ENCODE measurements at regions of chr2 and their contacts with region 1.

Region 1: DNA sequence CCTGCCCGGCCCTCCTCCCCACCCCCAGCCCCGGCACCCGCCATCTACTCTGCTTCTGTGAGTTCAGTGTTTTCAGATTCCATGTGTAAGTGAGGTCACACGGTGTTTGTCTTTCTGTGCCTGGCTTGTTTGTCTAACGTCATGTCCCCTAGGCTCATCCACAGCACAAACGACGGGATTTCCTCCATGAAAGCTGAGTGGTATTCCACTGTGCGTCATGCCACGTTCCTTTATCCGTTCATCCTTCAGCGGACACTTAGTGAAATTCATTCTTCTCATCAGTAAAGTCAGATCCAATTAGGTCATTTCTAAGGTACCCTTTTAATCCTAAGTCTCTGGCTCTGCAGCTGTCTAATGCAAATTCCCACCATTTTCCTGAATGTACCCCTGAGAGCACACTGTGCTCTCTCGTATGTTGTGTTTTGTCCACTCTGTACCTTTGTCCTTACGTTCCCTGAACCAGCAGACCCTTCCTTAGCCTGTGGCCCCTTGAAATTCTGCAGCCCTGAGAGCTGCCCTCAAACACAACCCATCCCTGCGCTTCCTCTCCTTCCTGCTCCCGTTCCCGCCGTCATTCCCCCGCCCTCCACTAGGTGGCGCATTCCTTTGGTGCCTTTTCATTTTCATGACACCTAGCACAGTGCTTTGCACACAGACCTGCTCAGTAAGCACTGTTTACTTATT is 44.1 kb downstream of the TRAPPC12 start:
- DNase-seq: peak; percentile 88
- H3K4me3 ChIP-seq: no peak overlapping the region
- H3K27ac ChIP-seq: no peak overlapping the region
- H3K4me1 ChIP-seq: peaks cover 0 to 15% of the 10 kb centered on the region in 2 experiments; a peak in 1 of 4 replicates
- H3K27me3 ChIP-seq: no peaks in the 10 kb centered on the region
- CTCF ChIP-seq: peak; percentile 100
- EP300 ChIP-seq: no peak
- RAD21 ChIP-seq: peak; percentile 68

Region 2: DNA sequence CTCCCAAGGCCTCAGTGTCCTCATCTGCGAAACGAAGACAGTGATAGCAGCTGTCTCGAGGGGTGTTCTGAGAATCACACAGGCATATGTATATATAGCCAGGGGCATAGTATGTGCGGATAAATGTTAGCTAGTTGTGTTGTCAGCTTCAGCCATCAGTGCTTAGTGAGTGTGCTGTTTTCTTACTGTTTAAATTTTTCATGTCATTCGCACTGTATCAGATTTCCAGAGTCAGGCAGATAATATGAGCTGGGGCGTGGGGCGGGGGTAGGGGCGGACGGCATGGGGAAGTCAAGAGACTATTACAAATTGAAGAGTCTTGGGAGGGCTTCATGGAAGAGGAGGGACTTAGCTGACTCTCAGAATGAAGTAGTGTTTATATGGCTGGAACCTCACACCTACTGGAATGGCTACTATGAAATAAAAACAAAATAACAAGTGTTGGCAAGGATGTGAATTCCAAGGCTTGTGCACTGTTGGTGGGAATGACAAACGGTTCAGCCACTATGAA is 37.1 kb before region 1 on chr2:
- CTCF ChIA-PET with region 1: interaction called, 13 read pairs
- POLR2A ChIA-PET with region 1: no interaction called
- DNase-seq: no peak
- H3K4me3 ChIP-seq: no peak overlapping the region
- H3K27ac ChIP-seq: peak overlapping the region in 1 of 2 experiments; percentile 50; a peak in 1 of 4 replicates
- H3K4me1 ChIP-seq: peaks cover 0 to 5% of the 10 kb centered on the region in 2 experiments; a peak in 2 of 4 replicates
- H3K27me3 ChIP-seq: no peaks in the 10 kb centered on the region
- CTCF ChIP-seq: no peak
- EP300 ChIP-seq: no peak
- RAD21 ChIP-seq: no peak

Region 3: DNA sequence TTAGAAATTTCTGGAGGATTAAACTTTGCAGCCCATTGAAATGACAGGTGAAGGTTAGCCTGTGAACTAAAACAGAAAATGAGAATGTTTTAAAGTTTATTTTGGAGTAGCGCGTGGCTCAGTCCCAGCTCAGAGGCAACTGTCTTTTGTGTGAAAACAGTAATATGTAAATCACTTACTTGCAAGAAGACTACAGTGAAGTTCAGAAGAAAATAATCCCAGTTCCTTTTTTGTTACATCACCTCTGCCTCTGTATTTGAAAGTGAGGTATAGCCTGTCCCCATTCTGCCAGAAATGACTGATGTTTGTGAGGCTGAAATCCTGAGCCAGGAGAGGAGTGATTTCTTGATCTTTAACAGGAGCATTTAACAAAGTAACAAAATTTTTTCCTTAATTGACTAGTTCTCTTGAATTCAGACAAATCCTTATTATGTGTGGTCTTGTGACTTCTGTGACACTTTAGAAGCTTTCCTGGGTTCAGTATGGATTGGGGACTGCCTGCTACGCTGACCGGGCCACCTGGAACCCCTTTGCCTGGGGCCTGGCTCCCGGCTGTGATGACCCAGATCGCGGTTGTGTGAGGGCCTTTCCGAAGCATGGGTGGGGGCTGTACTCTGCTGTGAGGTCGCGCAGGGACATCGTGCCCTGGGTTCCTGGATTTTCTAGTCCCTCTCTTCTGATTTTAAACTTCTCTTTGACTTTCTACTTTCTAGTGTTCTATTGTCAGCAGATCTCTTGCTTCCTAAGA is 19.9 kb before region 1 on chr2:
- CTCF ChIA-PET with region 1: interaction called, 29 read pairs
- POLR2A ChIA-PET with region 1: interaction called, 3 read pairs
- DNase-seq: no peak
- H3K4me3 ChIP-seq: no peak overlapping the region
- H3K27ac ChIP-seq: no peak overlapping the region
- H3K4me1 ChIP-seq: peaks cover 0 to 19% of the 10 kb centered on the region in 2 experiments; a peak in 2 of 4 replicates
- H3K27me3 ChIP-seq: no peaks in the 10 kb centered on the region
- CTCF ChIP-seq: no peak
- EP300 ChIP-seq: no peak
- RAD21 ChIP-seq: no peak

Region 4: GRCh38 chr2:3449086-3449485 is 25.5 kb after region 1 on chr2:
- CTCF ChIA-PET with region 1: interaction called, 49 read pairs
- POLR2A ChIA-PET with region 1: no interaction called
- DNase-seq: peak; percentile 79
- H3K4me3 ChIP-seq: no peak overlapping the region
- H3K27ac ChIP-seq: peak overlapping the region in 1 of 2 experiments; percentile 94; a peak in 2 of 4 replicates
- H3K4me1 ChIP-seq: peaks cover 0 to 29% of the 10 kb centered on the region in 2 experiments; a peak in 2 of 4 replicates
- H3K27me3 ChIP-seq: no peaks in the 10 kb centered on the region
- CTCF ChIP-seq: no peak
- EP300 ChIP-seq: 0 out of 4 replicates have a peak, but pooled peaks of 1 of the 2 experiments have one; percentile 10
- RAD21 ChIP-seq: no peak

Region 5: DNA sequence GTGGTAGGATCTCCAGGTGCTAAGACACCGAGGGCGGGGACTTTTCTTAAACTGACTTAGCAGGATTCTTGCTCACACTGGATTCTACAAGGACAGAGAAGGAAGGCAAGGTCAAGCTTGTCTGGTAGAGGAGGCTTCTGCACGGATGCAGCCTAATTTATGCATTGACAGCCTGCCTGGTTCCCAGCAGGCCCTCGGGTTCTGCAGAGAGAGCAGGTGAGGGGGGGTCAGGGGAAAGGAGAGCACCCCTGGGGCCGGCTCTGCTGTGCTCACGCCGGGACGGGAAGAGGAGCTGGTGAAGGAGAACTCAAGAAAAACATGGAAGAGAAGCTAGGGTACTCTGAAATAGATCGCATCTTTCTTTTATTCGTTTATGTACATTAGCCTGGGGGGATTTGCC is 49.3 kb after region 1 on chr2:
- CTCF ChIA-PET with region 1: interaction called, 15 read pairs
- POLR2A ChIA-PET with region 1: no interaction called
- DNase-seq: no peak
- H3K4me3 ChIP-seq: no peak overlapping the region
- H3K27ac ChIP-seq: no peak overlapping the region
- H3K4me1 ChIP-seq: peaks cover 2 to 9% of the 10 kb centered on the region in 2 experiments; a peak in 2 of 4 replicates
- H3K27me3 ChIP-seq: no peaks in the 10 kb centered on the region
- CTCF ChIP-seq: no peak
- EP300 ChIP-seq: no peak
- RAD21 ChIP-seq: no peak

Region 6: GRCh38 chr2:3536682-3537632 is 113.3 kb after region 1 on chr2:
- CTCF ChIA-PET with region 1: no interaction called
- POLR2A ChIA-PET with region 1: no interaction called
- DNase-seq: peak; percentile 77
- H3K4me3 ChIP-seq: peak overlapping the region; percentile 32 to 63; a peak in 3 of 4 replicates
- H3K27ac ChIP-seq: peak overlapping the region; percentile 72 to 98; a peak in 3 of 4 replicates
- H3K4me1 ChIP-seq: peaks cover 3 to 13% of the 10 kb centered on the region in 2 experiments; a peak in 3 of 4 replicates
- H3K27me3 ChIP-seq: no peaks in the 10 kb centered on the region
- CTCF ChIP-seq: peak; percentile 72
- EP300 ChIP-seq: no peak
- RAD21 ChIP-seq: peak; percentile 15; the same call in 1 of the 2 replicates

Region 7: DNA sequence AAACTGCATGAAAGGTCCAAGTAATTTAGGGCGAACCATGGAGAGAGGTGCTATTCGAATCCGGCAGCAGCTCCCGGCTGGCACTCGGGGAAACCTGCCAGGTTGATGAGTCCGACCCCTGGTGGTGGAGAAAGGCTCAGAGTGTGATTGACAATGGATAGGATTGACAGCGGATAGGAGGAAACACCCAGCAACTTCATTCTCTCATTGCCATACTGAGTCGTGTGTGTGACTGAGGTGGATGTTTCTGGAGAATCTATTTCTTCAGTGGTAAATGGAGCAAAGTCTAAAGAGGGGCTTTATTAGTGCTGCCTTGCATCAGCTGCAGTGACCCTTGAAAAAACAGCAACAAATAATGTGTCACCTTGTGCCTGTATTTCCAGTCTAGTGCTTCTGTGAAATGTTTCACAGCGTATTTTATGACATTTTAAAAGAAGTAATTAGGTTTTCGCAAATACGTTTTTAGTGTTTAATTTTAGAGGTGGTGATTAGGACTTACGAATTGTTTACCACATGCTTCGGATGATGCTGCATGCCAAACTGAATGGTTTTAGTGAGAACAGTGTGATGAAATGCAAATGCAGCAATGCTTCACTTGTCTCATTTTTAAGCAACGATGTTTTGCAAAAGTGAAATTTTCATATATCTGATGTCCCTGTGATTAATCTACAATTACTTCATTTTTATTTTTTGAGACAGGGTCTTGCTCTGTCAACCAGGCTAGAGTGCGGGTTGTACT is 381.7 kb after region 1 on chr2:
- CTCF ChIA-PET with region 1: no interaction called
- POLR2A ChIA-PET with region 1: no interaction called
- DNase-seq: peak; percentile 75
- H3K4me3 ChIP-seq: peak overlapping the region in 1 of 2 experiments; percentile 4; a peak in 1 of 4 replicates
- H3K27ac ChIP-seq: no peak overlapping the region
- H3K4me1 ChIP-seq: no peaks in the 10 kb centered on the region; a peak in 1 of 4 replicates
- H3K27me3 ChIP-seq: no peaks in the 10 kb centered on the region
- CTCF ChIP-seq: peak; percentile 14; the same call in 1 of the 2 replicates
- EP300 ChIP-seq: no peak
- RAD21 ChIP-seq: peak; percentile 56

Region 8: DNA sequence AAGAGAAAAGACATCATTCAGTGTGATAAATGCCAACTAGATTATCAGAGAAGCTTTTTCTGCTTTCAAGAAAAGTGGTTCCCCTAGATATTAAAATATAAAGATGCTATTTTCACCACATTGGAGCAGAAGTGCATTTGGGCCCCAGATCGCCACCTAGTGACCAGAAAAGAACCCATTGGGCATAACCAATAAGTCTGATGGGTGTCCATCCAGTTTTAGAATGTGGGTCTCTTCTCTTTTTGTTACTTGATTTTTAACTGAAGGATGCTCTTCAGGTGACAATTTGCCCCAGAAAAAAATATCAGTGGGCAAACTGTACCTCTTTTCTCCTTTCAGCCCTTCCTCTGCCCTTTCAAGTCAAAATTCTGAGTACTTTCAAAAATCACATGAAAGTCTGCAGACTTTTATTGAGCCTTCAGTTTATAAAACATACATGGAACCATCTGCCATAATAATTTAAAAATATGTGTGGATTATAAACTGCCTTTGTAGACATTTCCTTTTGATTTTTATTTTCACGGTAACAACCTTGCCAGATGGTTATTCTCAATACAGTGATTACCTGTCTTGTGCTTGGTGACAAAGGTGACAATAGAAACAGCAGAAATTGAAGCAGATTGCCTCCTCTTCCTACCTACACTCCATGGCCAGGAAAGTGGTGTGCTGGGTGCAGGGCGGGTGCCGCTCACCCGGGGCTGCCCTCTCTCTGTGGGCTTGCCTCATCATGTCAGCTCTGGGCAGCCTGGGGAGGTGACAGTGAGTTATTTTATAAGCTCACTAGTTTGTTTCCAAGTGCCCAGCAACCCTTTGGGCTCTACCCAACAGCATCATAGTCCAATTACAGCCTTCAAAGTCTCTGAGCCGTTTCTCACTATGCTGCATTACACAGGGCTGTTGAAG is 404.3 kb after region 1 on chr2:
- CTCF ChIA-PET with region 1: no interaction called
- POLR2A ChIA-PET with region 1: no interaction called
- DNase-seq: peak; percentile 56
- H3K4me3 ChIP-seq: no peak overlapping the region; a peak in 1 of 4 replicates
- H3K27ac ChIP-seq: no peak overlapping the region
- H3K4me1 ChIP-seq: no peaks in the 10 kb centered on the region
- H3K27me3 ChIP-seq: no peaks in the 10 kb centered on the region
- CTCF ChIP-seq: peak; percentile 47
- EP300 ChIP-seq: no peak
- RAD21 ChIP-seq: peak; percentile 54

Region 9: GRCh38 chr2:3959372-3959771 is 535.7 kb after region 1 on chr2:
- CTCF ChIA-PET with region 1: no interaction called
- POLR2A ChIA-PET with region 1: no interaction called
- DNase-seq: peak; percentile 75
- H3K4me3 ChIP-seq: no peak overlapping the region; a peak in 1 of 4 replicates
- H3K27ac ChIP-seq: no peak overlapping the region
- H3K4me1 ChIP-seq: peaks cover 0 to 3% of the 10 kb centered on the region in 2 experiments; a peak in 1 of 4 replicates
- H3K27me3 ChIP-seq: no peaks in the 10 kb centered on the region
- CTCF ChIP-seq: peak; percentile 79
- EP300 ChIP-seq: no peak
- RAD21 ChIP-seq: peak; percentile 94

Measured in SK-N-SH (cell line).